Common myeloid progenitor, CD34-positive (primary cell): ENCODE measurements at regions of chr3 and their contacts with region 1.

Region 1: DNA sequence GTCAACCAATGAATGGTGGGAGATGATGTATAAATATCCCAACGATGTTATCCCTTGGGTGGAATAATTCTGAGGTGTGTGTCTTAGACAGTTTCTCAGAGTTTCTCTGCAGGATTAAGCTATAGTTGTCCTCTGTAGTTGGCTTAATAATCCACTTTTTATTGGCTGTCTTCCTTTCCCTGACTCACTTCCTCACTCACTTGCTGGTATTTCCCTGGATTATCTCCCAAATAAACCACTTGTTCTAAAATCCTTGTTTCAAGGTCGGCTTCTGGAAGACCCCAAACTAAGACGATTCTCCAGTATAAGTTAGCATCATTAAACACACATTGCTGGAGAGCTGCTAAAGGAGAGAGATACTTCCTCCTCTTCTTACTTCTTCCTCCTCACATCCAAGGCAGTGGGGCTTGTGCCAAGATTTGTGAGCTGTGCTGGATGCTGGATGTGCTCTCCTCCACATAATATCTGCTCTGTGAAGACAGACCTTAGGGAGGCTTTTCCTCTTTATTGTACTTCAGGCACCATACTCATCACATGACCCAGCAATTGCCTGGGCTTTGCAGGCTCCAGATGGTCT is 22.5 kb upstream of the ROPN1 start:
- DNase-seq: no peak
- H3K4me3 ChIP-seq: no peak overlapping the region
- H3K27ac ChIP-seq: no peak overlapping the region
- H3K4me1 ChIP-seq: no peaks in the 10 kb centered on the region
- H3K27me3 ChIP-seq: peaks cover 0 to 2% (median 0%) of the 10 kb centered on the region in 5 experiments

Region 2: DNA sequence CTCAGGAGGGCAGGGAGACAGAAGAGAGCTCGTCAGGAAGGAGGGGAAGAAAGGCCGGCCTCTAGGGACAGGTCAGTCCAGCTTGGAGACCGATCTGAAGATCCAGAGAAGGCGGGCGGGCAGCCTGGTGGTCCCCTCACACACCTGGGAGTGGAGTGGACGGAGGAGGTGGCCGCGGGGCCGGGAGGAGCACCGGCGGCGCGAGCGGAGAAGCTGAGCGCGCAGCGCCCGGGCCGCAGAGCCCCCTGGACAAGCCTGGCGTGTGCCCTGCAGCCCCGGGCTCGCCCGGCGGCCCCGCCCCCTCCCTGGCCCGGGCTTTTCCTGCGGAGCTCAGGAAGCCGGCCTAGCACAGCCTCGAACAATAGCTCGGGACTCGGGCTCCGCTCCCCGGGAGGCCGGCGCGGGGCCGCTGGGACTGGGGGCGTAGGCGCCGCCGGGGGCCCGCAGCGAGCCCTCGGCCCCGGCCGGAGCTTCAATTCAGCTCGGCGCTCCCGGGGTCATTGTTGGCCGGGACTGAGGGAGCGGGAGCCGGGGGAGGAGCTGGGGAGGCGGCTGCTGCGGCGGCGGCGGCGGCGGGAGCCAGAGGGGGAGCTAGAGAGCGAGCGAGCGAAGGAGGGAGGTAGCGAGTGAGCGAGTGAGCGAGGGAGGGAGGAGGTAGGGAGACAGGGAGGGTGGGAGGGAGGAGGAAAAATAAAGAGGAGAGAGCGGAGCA is 18.4 kb after region 1 on chr3:
- CTCF ChIA-PET with region 1: interaction called, 12 read pairs
- POLR2A ChIA-PET with region 1: interaction called, 3 read pairs
- DNase-seq: peak; percentile 45 to 68 (median 54)
- H3K4me3 ChIP-seq: peak overlapping the region; percentile 4 to 73 (median 61)
- H3K27ac ChIP-seq: no peak overlapping the region
- H3K4me1 ChIP-seq: peaks cover 0 to 18% (median 15%) of the 10 kb centered on the region in 4 experiments
- H3K27me3 ChIP-seq: peaks cover 27 to 82% (median 41%) of the 10 kb centered on the region in 5 experiments

Region 3: GRCh38 chr3:124078953-124079911 is 64.8 kb after region 1 on chr3:
- CTCF ChIA-PET with region 1: interaction called, 10 read pairs
- POLR2A ChIA-PET with region 1: no interaction called
- DNase-seq: peak; percentile 36 to 62 (median 58)
- H3K4me3 ChIP-seq: no peak overlapping the region
- H3K27ac ChIP-seq: no peak overlapping the region
- H3K4me1 ChIP-seq: peaks cover 0 to 3% (median 0%) of the 10 kb centered on the region in 4 experiments
- H3K27me3 ChIP-seq: peaks cover 0 to 2% (median 2%) of the 10 kb centered on the region in 5 experiments

Region 4: GRCh38 chr3:124281453-124282316 is 267.2 kb after region 1 on chr3:
- CTCF ChIA-PET with region 1: interaction called, 37 read pairs
- POLR2A ChIA-PET with region 1: no interaction called
- DNase-seq: peak; percentile 26 to 54 (median 38)
- H3K4me3 ChIP-seq: no peak overlapping the region
- H3K27ac ChIP-seq: no peak overlapping the region
- H3K4me1 ChIP-seq: no peaks in the 10 kb centered on the region
- H3K27me3 ChIP-seq: peaks cover 0 to 21% (median 9%) of the 10 kb centered on the region in 5 experiments